ENCODE measurements at regions of chr2 and their contacts with region 1.

Region 1: DNA sequence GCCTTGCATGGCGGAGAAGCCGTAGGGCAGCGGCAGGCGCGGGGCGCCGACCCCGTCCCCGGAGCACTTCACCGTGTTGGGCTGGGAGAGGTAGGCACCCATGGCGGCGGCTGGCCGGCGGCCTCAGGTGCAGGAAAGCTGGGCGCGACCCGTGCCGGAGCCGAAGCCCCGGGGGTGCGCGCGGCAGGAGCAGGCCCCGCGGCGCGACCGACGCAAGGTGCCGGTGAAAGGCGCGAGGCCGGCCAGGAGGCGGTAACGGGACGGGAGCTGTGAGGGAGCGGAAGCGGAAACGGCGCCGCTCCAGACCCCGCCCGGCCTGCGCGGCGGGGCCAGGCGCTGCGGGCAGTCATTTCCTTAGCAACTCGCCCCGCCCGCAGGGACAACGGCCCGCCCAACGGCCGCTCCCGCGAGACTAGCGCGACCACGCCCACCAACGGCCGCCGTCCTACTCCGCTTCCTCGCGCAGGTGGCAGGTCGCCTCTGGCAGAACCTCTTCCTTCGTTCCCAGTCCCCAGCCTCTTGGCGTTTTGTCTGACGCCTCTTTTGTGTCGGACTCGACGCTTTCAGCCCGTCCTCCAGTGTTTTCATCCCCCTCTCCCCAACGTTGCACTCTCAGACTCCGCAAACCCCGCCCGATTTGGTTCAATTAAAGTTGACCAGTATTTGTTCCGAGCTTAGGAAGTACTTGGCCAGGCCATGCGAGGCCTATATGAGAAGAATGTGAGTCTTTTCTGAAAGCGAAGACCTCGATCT is at the start of gene PPM1G:
- DNase-seq: peak; percentile 98
- ATAC-seq: peak; percentile 96
- H3K4me3 Mint-ChIP-seq: peak within 1 kb of the TSS; percentile 87
- H3K27ac Mint-ChIP-seq: peak within 1 kb of the TSS; percentile 95
- H3K4me1 Mint-ChIP-seq: peaks cover 31% of the 10 kb centered on the region
- H3K27me3 Mint-ChIP-seq: no peaks in the 10 kb centered on the region
- CTCF ChIP-seq: no peak
- total RNA-seq, gene PPM1G: 74.7 and 75.2 TPM in 2 replicates

Region 2: DNA sequence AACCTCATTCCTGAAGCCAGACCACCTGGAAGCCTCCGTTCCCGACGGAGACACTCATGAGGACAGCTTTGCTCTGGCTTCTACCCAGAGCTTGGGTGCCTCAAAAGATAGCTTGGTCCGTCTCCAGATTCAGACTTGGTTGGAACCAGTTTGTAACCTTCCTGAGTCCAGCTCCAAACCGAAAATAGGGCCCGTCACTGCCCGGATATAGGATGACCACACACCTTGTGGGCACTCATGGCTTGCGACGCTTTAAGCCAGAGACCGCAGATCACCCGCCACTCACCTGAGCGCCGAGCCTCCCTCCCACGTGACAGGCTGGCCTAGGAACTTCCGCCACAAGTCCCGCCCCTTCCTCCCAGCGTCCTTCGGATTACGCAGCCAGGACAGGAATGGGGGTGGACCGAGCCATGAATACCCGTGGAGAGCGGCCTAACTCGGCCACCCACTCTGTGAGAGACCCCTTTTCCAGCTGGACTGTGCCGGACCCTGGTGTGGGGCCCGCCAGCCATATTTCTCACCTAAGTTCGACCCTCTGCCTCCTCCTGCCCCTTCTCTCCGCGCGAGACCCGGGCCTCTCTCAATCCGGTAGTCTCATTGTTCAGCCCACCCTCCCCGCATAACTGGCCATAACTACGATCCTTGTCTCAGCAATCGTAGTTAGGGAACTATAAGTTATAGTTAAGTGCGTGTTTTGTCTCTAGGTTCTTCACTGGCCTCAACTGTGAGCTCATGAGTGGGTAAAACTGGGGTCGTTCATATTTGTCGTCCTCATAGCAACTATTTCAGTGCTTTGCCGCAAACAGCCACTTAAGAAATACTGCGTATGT is 86.5 kb before region 1 on chr2 and contains the start of gene MPV17:
- CTCF ChIA-PET with region 1: no interaction called
- POLR2A ChIA-PET with region 1: interaction called, 9 read pairs
- intact Hi-C with region 1: loop called (anchors 1 kb)
- DNase-seq: peak; percentile 79
- ATAC-seq: peak; percentile 95
- H3K4me3 Mint-ChIP-seq: peak within 1 kb of the TSS; percentile 99
- H3K27ac Mint-ChIP-seq: peak within 1 kb of the TSS; percentile 96
- H3K4me1 Mint-ChIP-seq: peaks cover 25% of the 10 kb centered on the region
- H3K27me3 Mint-ChIP-seq: no peaks in the 10 kb centered on the region
- CTCF ChIP-seq: no peak
- total RNA-seq, gene MPV17: 78.1 and 98.3 TPM in 2 replicates

Region 3: GRCh38 chr2:27356382-27357181 is 52.9 kb before region 1 on chr2 and contains the start of gene GTF3C2:
- CTCF ChIA-PET with region 1: no interaction called
- POLR2A ChIA-PET with region 1: interaction called, 19 read pairs
- intact Hi-C with region 1: loop called (anchors 1 kb)
- DNase-seq: peak; percentile 87
- ATAC-seq: peak; percentile 83
- H3K4me3 Mint-ChIP-seq: peak within 1 kb of the TSS; percentile 98
- H3K27ac Mint-ChIP-seq: peak within 1 kb of the TSS; percentile 100
- H3K4me1 Mint-ChIP-seq: peaks cover 53% of the 10 kb centered on the region
- H3K27me3 Mint-ChIP-seq: no peaks in the 10 kb centered on the region
- CTCF ChIP-seq: no peak
- total RNA-seq, gene GTF3C2: 91.7 and 119 TPM in 2 replicates

Region 4: DNA sequence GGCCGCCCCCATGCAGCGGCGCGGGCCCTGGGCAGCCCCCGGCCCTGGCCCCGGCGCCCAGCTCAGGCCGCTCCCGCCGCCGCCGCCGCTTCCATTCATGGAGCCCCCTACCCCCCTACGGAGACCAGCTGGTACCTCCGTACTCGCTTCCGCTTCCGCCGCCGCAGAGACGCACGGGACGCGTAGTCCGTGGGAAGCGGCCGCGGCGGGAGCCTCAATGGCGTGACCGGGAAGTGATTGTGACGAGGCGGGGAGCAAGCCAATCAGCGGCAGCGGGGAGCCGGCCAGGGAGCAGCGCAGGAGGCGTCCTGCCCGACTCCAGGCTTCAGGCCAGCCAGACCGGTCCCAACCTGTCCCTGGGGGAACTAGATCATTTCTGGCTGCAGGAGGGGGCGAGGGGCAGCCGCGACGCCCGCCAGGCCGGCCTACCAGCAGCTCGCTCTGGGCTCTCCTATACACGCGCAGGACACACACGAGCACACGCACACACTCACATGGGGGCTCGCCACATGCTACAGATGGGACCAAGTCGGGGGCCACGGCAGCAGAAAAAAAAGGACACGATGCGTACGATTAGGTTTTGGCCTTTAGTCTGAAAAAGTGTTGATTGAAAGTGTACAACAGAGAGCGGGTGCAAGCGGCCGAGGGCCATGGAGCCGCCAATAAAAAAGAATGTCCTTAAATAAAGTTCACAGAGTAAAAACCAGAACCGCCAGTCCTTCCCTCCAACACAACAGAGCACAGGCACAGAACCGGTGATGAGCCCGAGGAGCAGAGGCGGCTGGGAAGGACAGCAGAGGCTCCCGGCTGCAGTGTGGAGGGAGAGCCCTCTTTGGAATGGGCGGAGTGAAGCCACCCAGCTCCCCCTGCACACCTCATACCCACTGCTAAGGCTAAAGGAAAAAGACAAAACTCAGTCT is 28.6 kb before region 1 on chr2 and contains the start of gene ZNF513:
- CTCF ChIA-PET with region 1: no interaction called
- POLR2A ChIA-PET with region 1: interaction called, 38 read pairs
- intact Hi-C with region 1: loop called (anchors 1 kb)
- DNase-seq: peak; percentile 85
- ATAC-seq: peak; percentile 91
- H3K4me3 Mint-ChIP-seq: peak within 1 kb of the TSS; percentile 87
- H3K27ac Mint-ChIP-seq: peak within 1 kb of the TSS; percentile 89
- H3K4me1 Mint-ChIP-seq: peaks cover 29% of the 10 kb centered on the region
- H3K27me3 Mint-ChIP-seq: no peaks in the 10 kb centered on the region
- CTCF ChIP-seq: no peak
- total RNA-seq, gene ZNF513: 30.1 and 32.8 TPM in 2 replicates

Region 5: GRCh38 chr2:27441958-27442919 is 32.7 kb after region 1 on chr2 and contains the start of gene KRTCAP3:
- CTCF ChIA-PET with region 1: no interaction called
- POLR2A ChIA-PET with region 1: no interaction called
- intact Hi-C with region 1: loop called (anchors 1 kb)
- DNase-seq: peak; percentile 68
- ATAC-seq: peak; percentile 98
- H3K4me3 Mint-ChIP-seq: peak within 1 kb of the TSS; percentile 52
- H3K27ac Mint-ChIP-seq: peak within 1 kb of the TSS; percentile 30
- H3K4me1 Mint-ChIP-seq: peaks cover 13% of the 10 kb centered on the region
- H3K27me3 Mint-ChIP-seq: no peaks in the 10 kb centered on the region
- CTCF ChIP-seq: no peak
- total RNA-seq, gene KRTCAP3: 6.3 and 10.0 TPM in 2 replicates

Region 6: GRCh38 chr2:27663463-27664249 is 254.2 kb after region 1 on chr2 and contains the starts of genes SLC4A1AP and SUPT7L:
- CTCF ChIA-PET with region 1: no interaction called
- POLR2A ChIA-PET with region 1: interaction called, 10 read pairs
- intact Hi-C with region 1: loop called (anchors 1 kb)
- DNase-seq: peak; percentile 72
- ATAC-seq: peak; percentile 81
- H3K4me3 Mint-ChIP-seq: peak within 1 kb of the TSS; percentile 100
- H3K27ac Mint-ChIP-seq: peak within 1 kb of the TSS; percentile 99
- H3K4me1 Mint-ChIP-seq: peaks cover 46% of the 10 kb centered on the region
- H3K27me3 Mint-ChIP-seq: no peaks in the 10 kb centered on the region
- CTCF ChIP-seq: no peak
- total RNA-seq, gene SLC4A1AP: 21.4 and 22.0 TPM in 2 replicates
- total RNA-seq, gene SUPT7L: 28.1 and 30.9 TPM in 2 replicates

Region 7: GRCh38 chr2:28068088-28068487 is 658.6 kb after region 1 on chr2:
- CTCF ChIA-PET with region 1: no interaction called
- POLR2A ChIA-PET with region 1: no interaction called
- intact Hi-C with region 1: no loop called
- DNase-seq: no peak
- ATAC-seq: no peak
- H3K4me3 Mint-ChIP-seq: no peak overlapping the region
- H3K27ac Mint-ChIP-seq: no peak overlapping the region
- H3K4me1 Mint-ChIP-seq: no peaks in the 10 kb centered on the region
- H3K27me3 Mint-ChIP-seq: no peaks in the 10 kb centered on the region
- CTCF ChIP-seq: no peak

Measured in activated B cell treated with CpG ODN at 0.5 μM for 24 hours (primary cell).